CD8-positive, alpha-beta T cell (primary cell): ENCODE measurements at regions of chr2 and their contacts with region 1.

Region 1: GRCh38 chr2:203238704-203239526 is at the start of gene CYP20A1:
- DNase-seq: peak; percentile 95 to 98 (median 97)
- ATAC-seq: peak; percentile 81
- H3K4me3 ChIP-seq: peak within 1 kb of the TSS; percentile 88 to 89
- H3K4me3 Mint-ChIP-seq: peak within 1 kb of the TSS; percentile 99
- H3K27ac ChIP-seq: peak within 1 kb of the TSS; percentile 92 to 98
- H3K27ac Mint-ChIP-seq: peak within 1 kb of the TSS; percentile 100
- H3K4me1 ChIP-seq: peaks cover 15% of the 10 kb centered on the region
- H3K4me1 Mint-ChIP-seq: peaks cover 30% of the 10 kb centered on the region
- H3K27me3 ChIP-seq: no peaks in the 10 kb centered on the region
- H3K27me3 Mint-ChIP-seq: no peaks in the 10 kb centered on the region
- CTCF ChIP-seq: no peak
- total RNA-seq, gene CYP20A1: 22.6 to 24.6 TPM

Region 2: GRCh38 chr2:202033321-202034248 is 1205.3 kb before region 1 on chr2 and contains the start of gene FZD7:
- CTCF ChIA-PET with region 1: no interaction called
- POLR2A ChIA-PET with region 1: no interaction called
- intact Hi-C with region 1: loop called in 1 of 2 experiments (anchors 2 kb)
- DNase-seq: peak; percentile 66 to 91 (median 83)
- ATAC-seq: peak; percentile 78
- H3K4me3 ChIP-seq: peak within 1 kb of the TSS; percentile 77 to 84
- H3K4me3 Mint-ChIP-seq: peak within 1 kb of the TSS; percentile 88
- H3K27ac ChIP-seq: peak within 1 kb of the TSS in 1 of 2 experiments; percentile 14
- H3K27ac Mint-ChIP-seq: no peak within 1 kb of the TSS
- H3K4me1 ChIP-seq: peaks cover 25% of the 10 kb centered on the region
- H3K4me1 Mint-ChIP-seq: peaks cover 13% of the 10 kb centered on the region
- H3K27me3 ChIP-seq: peaks cover 26 to 29% of the 10 kb centered on the region in 2 experiments
- H3K27me3 Mint-ChIP-seq: peaks cover 12% of the 10 kb centered on the region
- CTCF ChIP-seq: no peak
- total RNA-seq, gene FZD7: 0.73 to 0.97 TPM

Region 3: DNA sequence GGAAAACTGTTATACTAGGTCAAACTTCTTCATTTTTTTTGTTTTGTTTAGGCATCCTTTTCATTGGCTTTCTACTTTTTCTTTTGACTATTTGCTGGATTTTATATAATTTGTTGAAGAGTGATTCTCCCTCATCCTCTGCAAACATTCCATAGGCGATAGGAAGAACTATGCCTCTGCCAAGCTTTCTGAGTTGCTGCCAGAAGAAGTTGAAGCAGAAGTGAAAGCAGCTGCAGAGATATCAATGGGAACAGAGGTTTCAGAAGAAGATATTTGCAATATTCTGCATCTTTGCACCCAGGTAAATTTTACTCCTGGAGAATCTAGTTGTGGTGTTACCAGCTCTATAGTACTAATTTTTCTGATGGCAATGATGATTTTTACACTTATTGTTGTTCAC is 947.9 kb before region 1 on chr2:
- CTCF ChIA-PET with region 1: no interaction called
- POLR2A ChIA-PET with region 1: no interaction called
- intact Hi-C with region 1: loop called in 1 of 2 experiments (anchors 10 kb)
- DNase-seq: no peak
- ATAC-seq: no peak
- H3K4me3 ChIP-seq: no peak overlapping the region
- H3K4me3 Mint-ChIP-seq: no peak overlapping the region
- H3K27ac ChIP-seq: no peak overlapping the region
- H3K27ac Mint-ChIP-seq: no peak overlapping the region
- H3K4me1 ChIP-seq: no peaks in the 10 kb centered on the region
- H3K4me1 Mint-ChIP-seq: no peaks in the 10 kb centered on the region
- H3K27me3 ChIP-seq: no peaks in the 10 kb centered on the region
- H3K27me3 Mint-ChIP-seq: no peaks in the 10 kb centered on the region
- CTCF ChIP-seq: no peak

Region 4: GRCh38 chr2:202643012-202643858 is 595.7 kb before region 1 on chr2:
- CTCF ChIA-PET with region 1: no interaction called
- POLR2A ChIA-PET with region 1: no interaction called
- intact Hi-C with region 1: loop called in 1 of 2 experiments (anchors 5 kb)
- DNase-seq: peak in 4 of 9 experiments; percentile 9 to 81 (median 40)
- ATAC-seq: peak; percentile 75
- H3K4me3 ChIP-seq: peak overlapping the region; percentile 2 to 30
- H3K4me3 Mint-ChIP-seq: peak overlapping the region; percentile 76
- H3K27ac ChIP-seq: peak overlapping the region; percentile 38 to 83
- H3K27ac Mint-ChIP-seq: no peak overlapping the region
- H3K4me1 ChIP-seq: peaks cover 75% of the 10 kb centered on the region
- H3K4me1 Mint-ChIP-seq: peaks cover 61% of the 10 kb centered on the region
- H3K27me3 ChIP-seq: no peaks in the 10 kb centered on the region
- H3K27me3 Mint-ChIP-seq: no peaks in the 10 kb centered on the region
- CTCF ChIP-seq: no peak

Region 5: GRCh38 chr2:203164311-203164935 is 74.5 kb before region 1 on chr2:
- CTCF ChIA-PET with region 1: no interaction called
- POLR2A ChIA-PET with region 1: no interaction called
- intact Hi-C with region 1: no loop called
- DNase-seq: no peak
- ATAC-seq: no peak
- H3K4me3 ChIP-seq: no peak overlapping the region
- H3K4me3 Mint-ChIP-seq: no peak overlapping the region
- H3K27ac ChIP-seq: no peak overlapping the region
- H3K27ac Mint-ChIP-seq: no peak overlapping the region
- H3K4me1 ChIP-seq: no peaks in the 10 kb centered on the region
- H3K4me1 Mint-ChIP-seq: no peaks in the 10 kb centered on the region
- H3K27me3 ChIP-seq: no peaks in the 10 kb centered on the region
- H3K27me3 Mint-ChIP-seq: no peaks in the 10 kb centered on the region
- CTCF ChIP-seq: no peak

Region 6: DNA sequence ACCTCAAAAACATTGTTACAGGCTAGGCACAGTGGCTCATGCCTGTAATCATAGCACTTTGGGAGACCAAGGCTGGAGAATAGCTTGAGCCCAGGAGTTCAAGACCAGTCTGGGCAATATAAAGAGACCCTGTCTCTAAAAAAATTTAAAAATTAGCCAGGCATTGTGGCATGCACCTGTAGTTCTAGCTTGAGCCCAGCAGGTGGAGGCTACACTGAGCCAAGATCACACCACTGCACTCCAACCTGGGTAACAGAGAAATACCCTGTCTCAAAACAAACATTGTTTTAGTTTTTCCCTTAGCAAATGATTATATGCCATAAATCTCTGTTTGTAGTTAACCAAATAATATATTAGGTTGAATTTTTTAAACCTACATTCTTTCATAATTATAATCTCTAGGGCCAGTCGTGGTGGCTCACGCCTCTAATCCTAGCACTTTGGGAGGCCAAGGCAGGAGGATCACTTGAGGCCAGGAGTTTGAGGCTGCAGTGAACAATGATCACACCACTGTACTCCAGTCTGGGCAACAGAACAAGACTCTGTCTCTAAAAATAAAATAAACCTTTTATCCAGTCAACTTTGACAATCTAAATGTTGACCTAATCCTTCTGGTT is 13.4 kb before region 1 on chr2:
- CTCF ChIA-PET with region 1: interaction called, 4 read pairs
- POLR2A ChIA-PET with region 1: interaction called, 5 read pairs
- intact Hi-C with region 1: loop called in 1 of 2 experiments (anchors 1 kb)
- DNase-seq: peak in 7 of 9 experiments; percentile 13 to 64 (median 33)
- ATAC-seq: peak; percentile 87
- H3K4me3 ChIP-seq: no peak overlapping the region
- H3K4me3 Mint-ChIP-seq: no peak overlapping the region
- H3K27ac ChIP-seq: no peak overlapping the region
- H3K27ac Mint-ChIP-seq: no peak overlapping the region
- H3K4me1 ChIP-seq: no peaks in the 10 kb centered on the region
- H3K4me1 Mint-ChIP-seq: no peaks in the 10 kb centered on the region
- H3K27me3 ChIP-seq: no peaks in the 10 kb centered on the region
- H3K27me3 Mint-ChIP-seq: no peaks in the 10 kb centered on the region
- CTCF ChIP-seq: peak; percentile 71